Endothelial cell of umbilical vein (primary cell): ENCODE measurements at regions of chr1 and their contacts with region 1.

Region 1: GRCh38 chr1:171081314-171081753 is 9.4 kb upstream of the FMO3 start:
- DNase-seq: peak; percentile 18
- H3K4me3 ChIP-seq: no peak overlapping the region
- H3K27ac ChIP-seq: no peak overlapping the region
- H3K4me1 ChIP-seq: no peaks in the 10 kb centered on the region
- H3K27me3 ChIP-seq: no peaks in the 10 kb centered on the region
- CTCF ChIP-seq: peak in 1 of 2 donors; percentile 1
- POLR2A ChIP-seq: no peak

Region 2: GRCh38 chr1:170823120-170823519 is 258.2 kb before region 1 on chr1:
- CTCF ChIA-PET with region 1: no interaction called
- POLR2A ChIA-PET with region 1: no interaction called
- dilution Hi-C with region 1: no loop called
- intact Hi-C with region 1: no loop called
- DNase-seq: no peak
- H3K4me3 ChIP-seq: no peak overlapping the region
- H3K27ac ChIP-seq: no peak overlapping the region
- H3K4me1 ChIP-seq: no peaks in the 10 kb centered on the region
- H3K27me3 ChIP-seq: peaks cover 0 to 3% of the 10 kb centered on the region in 2 experiments
- CTCF ChIP-seq: no peak
- POLR2A ChIP-seq: no peak

Region 3: DNA sequence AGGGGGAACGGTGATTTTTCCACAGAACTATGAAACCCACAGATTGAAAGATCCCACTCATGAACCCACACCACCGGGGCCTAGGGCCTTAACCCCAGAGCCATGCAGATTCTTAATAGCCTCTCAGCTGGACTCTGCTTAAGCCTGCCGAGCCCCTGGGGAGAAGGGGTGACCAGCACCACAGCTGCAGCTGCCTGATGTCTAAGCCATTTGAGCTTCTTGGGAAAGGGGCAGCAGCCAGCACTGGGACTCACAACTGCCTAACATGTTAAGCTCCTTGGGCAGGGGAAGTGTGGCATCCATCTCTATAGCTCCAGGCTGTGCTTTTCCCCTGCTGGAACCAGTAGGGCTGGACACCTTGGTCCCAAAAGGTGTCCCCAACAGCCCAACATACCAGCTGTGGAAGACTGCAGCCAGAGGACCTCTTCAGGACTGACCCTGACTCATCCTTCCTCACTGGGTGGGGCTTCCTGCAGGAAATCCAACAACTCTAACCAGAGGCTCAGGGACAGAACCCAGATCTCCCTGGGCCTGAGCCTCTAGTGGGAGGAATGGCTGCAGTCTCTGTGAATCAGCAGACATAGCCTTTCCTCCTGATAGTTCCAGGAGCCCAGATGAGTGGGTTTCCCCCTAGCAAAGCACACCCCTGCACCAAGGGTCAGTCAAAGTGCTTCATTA is 25.2 kb before region 1 on chr1:
- CTCF ChIA-PET with region 1: no interaction called
- POLR2A ChIA-PET with region 1: no interaction called
- dilution Hi-C with region 1: no loop called
- intact Hi-C with region 1: no loop called
- DNase-seq: no peak
- H3K4me3 ChIP-seq: no peak overlapping the region
- H3K27ac ChIP-seq: no peak overlapping the region
- H3K4me1 ChIP-seq: no peaks in the 10 kb centered on the region
- H3K27me3 ChIP-seq: no peaks in the 10 kb centered on the region
- CTCF ChIP-seq: no peak
- POLR2A ChIP-seq: no peak

Region 4: GRCh38 chr1:171152549-171152948 is 71.2 kb after region 1 on chr1:
- CTCF ChIA-PET with region 1: no interaction called
- POLR2A ChIA-PET with region 1: no interaction called
- dilution Hi-C with region 1: no loop called
- intact Hi-C with region 1: no loop called
- DNase-seq: no peak
- H3K4me3 ChIP-seq: no peak overlapping the region
- H3K27ac ChIP-seq: no peak overlapping the region
- H3K4me1 ChIP-seq: no peaks in the 10 kb centered on the region
- H3K27me3 ChIP-seq: no peaks in the 10 kb centered on the region
- CTCF ChIP-seq: no peak
- POLR2A ChIP-seq: no peak

Region 5: DNA sequence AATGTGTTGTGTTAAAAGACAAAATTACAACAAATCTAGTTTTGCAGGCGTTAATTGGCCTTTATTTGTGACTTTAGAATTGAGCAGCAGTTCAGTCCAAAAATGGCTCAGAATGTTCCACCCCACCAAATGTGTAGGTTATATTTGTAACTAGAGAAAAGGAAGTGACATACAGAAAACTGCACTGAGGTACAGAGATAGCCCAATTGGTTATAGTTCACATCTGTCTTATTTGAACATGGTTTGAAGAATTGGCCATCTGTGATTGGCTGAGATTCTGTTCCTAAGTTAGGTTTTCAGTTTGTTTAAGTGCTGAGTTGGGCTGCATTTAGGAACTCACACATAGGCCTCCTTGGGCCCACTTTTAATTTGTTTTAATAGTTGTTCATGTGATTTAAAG is 91.7 kb after region 1 on chr1:
- CTCF ChIA-PET with region 1: no interaction called
- POLR2A ChIA-PET with region 1: no interaction called
- dilution Hi-C with region 1: no loop called
- intact Hi-C with region 1: no loop called
- DNase-seq: no peak
- H3K4me3 ChIP-seq: no peak overlapping the region
- H3K27ac ChIP-seq: no peak overlapping the region
- H3K4me1 ChIP-seq: no peaks in the 10 kb centered on the region
- H3K27me3 ChIP-seq: no peaks in the 10 kb centered on the region
- CTCF ChIP-seq: no peak
- POLR2A ChIP-seq: no peak

Region 6: DNA sequence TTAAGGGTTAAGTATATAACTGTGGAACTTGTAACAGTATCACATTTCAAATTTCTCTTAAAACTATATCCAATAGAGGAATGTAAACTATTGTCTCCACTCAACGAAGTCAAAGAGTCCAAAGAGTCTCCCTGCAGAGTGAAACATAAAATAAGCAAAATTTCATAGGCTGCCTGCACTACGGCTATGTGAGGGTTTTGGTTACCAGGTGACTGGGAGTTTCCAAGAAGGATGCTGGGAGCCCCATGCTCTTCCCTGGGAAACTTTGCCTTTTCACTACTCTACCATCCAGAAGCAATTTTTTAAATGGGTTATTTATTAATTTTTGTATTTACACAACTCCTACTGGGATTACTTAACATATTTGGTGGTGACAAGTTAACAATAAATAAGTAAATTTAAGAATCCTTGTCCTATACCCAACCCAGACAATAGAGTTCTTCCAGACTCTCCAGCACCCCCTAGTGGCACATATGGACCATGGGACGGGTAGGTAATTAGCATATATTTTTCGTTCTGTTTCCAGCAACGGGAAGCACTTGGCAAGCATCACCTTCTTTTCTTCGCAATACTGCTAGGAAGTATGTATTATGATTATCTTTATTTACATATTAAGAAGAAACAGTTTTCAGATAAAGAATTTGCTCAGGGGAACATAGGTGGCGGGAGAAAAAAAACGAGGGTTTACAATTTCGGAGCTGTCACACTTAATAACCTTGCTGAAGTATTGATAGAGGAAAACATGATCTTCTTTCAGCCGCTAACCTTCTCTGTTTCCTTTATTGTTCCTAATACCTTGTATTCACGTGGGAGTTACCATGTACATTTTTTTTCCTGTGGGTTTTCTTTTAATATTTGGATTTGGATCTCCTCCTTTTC is 107.3 kb after region 1 on chr1:
- CTCF ChIA-PET with region 1: interaction called, 12 read pairs
- POLR2A ChIA-PET with region 1: no interaction called
- dilution Hi-C with region 1: no loop called
- intact Hi-C with region 1: loop called (anchors 1 kb)
- DNase-seq: peak; percentile 63
- H3K4me3 ChIP-seq: no peak overlapping the region
- H3K27ac ChIP-seq: no peak overlapping the region
- H3K4me1 ChIP-seq: no peaks in the 10 kb centered on the region
- H3K27me3 ChIP-seq: no peaks in the 10 kb centered on the region
- CTCF ChIP-seq: peak; percentile 70 to 76
- POLR2A ChIP-seq: no peak

Region 7: DNA sequence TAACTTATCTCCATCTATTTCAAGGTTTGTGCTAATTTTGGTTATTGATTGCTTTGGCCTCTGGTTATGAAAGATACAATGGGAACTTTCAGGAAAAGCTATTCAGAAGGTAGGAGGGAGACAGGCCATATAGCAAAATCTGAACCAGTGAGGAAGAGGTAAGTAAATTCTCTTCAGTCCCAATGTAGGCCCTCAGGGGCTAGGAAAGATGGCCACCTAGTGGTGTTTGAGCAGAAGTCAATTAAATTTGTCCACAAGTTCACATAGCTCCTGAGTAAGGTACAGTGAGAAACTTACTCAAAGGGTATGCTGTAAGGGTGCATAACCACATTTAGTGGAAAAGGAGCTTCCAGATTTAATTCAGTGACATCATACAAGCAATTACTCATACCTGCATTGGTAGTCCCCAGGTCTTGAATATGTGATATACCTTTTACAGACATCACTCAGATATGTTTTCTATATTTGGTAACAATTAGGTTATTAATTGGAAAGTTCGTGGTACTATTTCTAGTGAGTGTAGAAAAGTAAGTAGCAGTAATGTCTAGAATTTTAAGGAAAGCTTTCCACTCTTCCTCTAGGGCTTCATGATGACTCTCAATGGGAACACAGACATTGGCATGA is 145.5 kb after region 1 on chr1:
- CTCF ChIA-PET with region 1: interaction called, 9 read pairs
- POLR2A ChIA-PET with region 1: no interaction called
- dilution Hi-C with region 1: no loop called
- intact Hi-C with region 1: loop called (anchors 1 kb)
- DNase-seq: peak; percentile 57
- H3K4me3 ChIP-seq: no peak overlapping the region
- H3K27ac ChIP-seq: no peak overlapping the region
- H3K4me1 ChIP-seq: no peaks in the 10 kb centered on the region
- H3K27me3 ChIP-seq: no peaks in the 10 kb centered on the region
- CTCF ChIP-seq: peak; percentile 44 to 53
- POLR2A ChIP-seq: no peak